Naive thymus-derived CD8-positive, alpha-beta T cell (primary cell): ENCODE measurements at regions of chr15 and their contacts with region 1.

Region 1: GRCh38 chr15:66497502-66498455 is at the start of gene SNAPC5:
- DNase-seq: peak; percentile 95 to 99 (median 97)
- ATAC-seq: peak; percentile 92
- H3K4me3 Mint-ChIP-seq: peak within 1 kb of the TSS; percentile 93 to 98 (median 96)
- H3K27ac Mint-ChIP-seq: peak within 1 kb of the TSS; percentile 94 to 99 (median 98)
- H3K4me1 Mint-ChIP-seq: peaks cover 16 to 69% (median 47%) of the 10 kb centered on the region in 4 donors
- H3K27me3 Mint-ChIP-seq: no peaks in the 10 kb centered on the region
- polyA plus RNA-seq, gene SNAPC5: 60.4 to 76.0 (median 69.6) TPM

Region 2: GRCh38 chr15:66293419-66294156 is 204.2 kb before region 1 on chr15 and contains the start of gene DIS3L:
- POLR2A ChIA-PET with region 1: interaction called, 12 read pairs
- DNase-seq: peak; percentile 47 to 77 (median 63)
- ATAC-seq: peak; percentile 79 to 85
- H3K4me3 Mint-ChIP-seq: peak within 1 kb of the TSS; percentile 79 to 97 (median 88)
- H3K27ac Mint-ChIP-seq: peak within 1 kb of the TSS; percentile 95 to 98 (median 96)
- H3K4me1 Mint-ChIP-seq: peaks cover 13 to 52% (median 44%) of the 10 kb centered on the region in 4 donors
- H3K27me3 Mint-ChIP-seq: no peaks in the 10 kb centered on the region
- polyA plus RNA-seq, gene DIS3L: 25.5 to 41.0 (median 27.0) TPM

Region 3: DNA sequence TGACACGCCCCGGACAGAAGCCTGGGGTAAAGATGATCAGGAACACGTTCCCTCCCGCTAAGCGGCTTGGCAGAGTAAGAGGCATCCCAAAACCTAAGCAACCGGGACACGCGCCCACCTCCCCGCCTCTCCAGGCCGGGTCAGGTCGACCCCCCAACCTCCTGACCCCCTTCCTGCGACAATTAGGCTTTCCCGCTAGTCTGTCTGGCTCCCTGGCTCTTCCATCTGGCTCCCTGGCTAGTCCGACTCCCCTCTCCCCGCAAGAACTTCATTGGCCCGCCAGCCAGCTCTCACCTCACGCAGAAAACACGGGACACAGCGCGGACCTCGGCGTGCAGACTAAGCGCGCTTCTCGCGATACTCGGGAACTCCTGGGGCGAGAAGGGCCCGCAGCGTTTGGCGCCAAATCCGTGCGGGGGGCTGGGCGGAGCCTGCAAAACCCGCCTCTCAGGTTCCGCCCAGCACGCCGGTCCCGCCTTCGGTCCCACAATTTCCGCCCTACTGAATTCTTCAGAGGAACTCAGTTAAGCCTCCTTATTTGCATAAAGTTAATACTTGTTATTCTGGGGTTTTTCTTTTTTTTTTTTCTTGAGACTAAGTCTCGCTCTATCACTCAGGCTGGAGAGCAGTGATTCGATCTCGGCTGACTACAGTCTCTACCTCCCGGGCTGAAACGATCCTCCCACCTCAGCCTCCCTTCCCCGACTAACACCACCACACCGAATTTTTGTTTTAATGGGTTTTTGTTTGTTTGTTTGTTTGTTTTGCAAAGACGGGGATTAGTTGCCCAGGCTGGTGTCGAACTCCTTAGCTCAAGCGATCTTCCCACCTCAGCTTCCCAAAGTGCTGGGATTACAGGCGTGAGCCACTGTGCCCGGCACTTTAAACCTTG is 141.2 kb before region 1 on chr15 and contains the start of gene TIPIN:
- POLR2A ChIA-PET with region 1: interaction called, 13 read pairs
- DNase-seq: peak; percentile 89 to 97 (median 96)
- ATAC-seq: peak; percentile 95 to 96
- H3K4me3 Mint-ChIP-seq: peak within 1 kb of the TSS; percentile 94 to 100 (median 98)
- H3K27ac Mint-ChIP-seq: peak within 1 kb of the TSS; percentile 93 to 98 (median 97)
- H3K4me1 Mint-ChIP-seq: peaks cover 17 to 31% (median 24%) of the 10 kb centered on the region in 4 donors
- H3K27me3 Mint-ChIP-seq: no peaks in the 10 kb centered on the region
- polyA plus RNA-seq, gene TIPIN: 9.0 to 12.1 (median 10.3) TPM

Region 4: GRCh38 chr15:66386204-66387123 is 111.3 kb before region 1 on chr15 and contains the start of gene MAP2K1:
- POLR2A ChIA-PET with region 1: interaction called, 56 read pairs
- DNase-seq: peak; percentile 94 to 99 (median 98)
- ATAC-seq: peak; percentile 83 to 89
- H3K4me3 Mint-ChIP-seq: peak within 1 kb of the TSS; percentile 87 to 100 (median 99)
- H3K27ac Mint-ChIP-seq: peak within 1 kb of the TSS; percentile 93 to 100 (median 98)
- H3K4me1 Mint-ChIP-seq: peaks cover 30 to 63% (median 54%) of the 10 kb centered on the region in 4 donors
- H3K27me3 Mint-ChIP-seq: no peaks in the 10 kb centered on the region
- polyA plus RNA-seq, gene MAP2K1: 34.7 to 41.7 (median 39.3) TPM

Region 5: DNA sequence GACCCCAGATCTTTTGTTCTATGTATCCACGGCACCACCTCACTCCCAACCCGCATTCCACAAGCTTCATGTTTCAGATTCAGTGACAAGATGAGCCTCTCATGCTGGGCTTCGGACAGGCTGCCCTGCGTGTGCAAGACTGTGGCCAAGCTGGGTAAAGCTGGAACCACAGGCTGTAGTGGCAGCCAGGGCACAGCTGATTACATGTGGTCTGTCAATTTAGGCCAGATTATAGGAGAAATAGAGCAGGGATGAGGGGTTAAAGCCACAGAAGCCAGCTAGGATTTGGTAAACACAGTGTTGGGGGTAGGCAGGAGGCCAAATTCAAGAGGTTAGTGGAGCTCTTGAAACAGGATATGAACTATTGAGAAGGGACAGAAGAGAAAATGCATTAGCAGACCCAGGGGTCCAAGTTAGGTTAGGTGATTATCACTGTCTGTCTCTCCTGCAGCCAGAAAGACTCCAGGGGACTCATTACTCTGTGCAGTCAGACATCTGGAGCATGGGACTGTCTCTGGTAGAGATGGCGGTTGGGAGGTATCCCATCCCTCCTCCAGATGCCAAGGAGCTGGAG is 13.2 kb before region 1 on chr15:
- POLR2A ChIA-PET with region 1: interaction called, 11 read pairs
- DNase-seq: no peak
- ATAC-seq: no peak
- H3K4me3 Mint-ChIP-seq: no peak overlapping the region
- H3K27ac Mint-ChIP-seq: peak overlapping the region in 7 of 10 donors; percentile 37 to 90 (median 67)
- H3K4me1 Mint-ChIP-seq: peaks cover 0 to 7% (median 4%) of the 10 kb centered on the region in 4 donors
- H3K27me3 Mint-ChIP-seq: no peaks in the 10 kb centered on the region